ENCODE measurements at regions of chr1 and their contacts with region 1.

Region 1: GRCh38 chr1:173429471-173430402 is 47.4 kb upstream of the PRDX6 start:
- DNase-seq: peak; percentile 92
- H3K4me3 ChIP-seq: peak overlapping the region; percentile 26
- H3K27ac ChIP-seq: peak overlapping the region; percentile 74
- H3K4me1 ChIP-seq: peaks cover 24% of the 10 kb centered on the region
- H3K27me3 ChIP-seq: no peaks in the 10 kb centered on the region
- CTCF ChIP-seq: peak; percentile 93

Region 2: DNA sequence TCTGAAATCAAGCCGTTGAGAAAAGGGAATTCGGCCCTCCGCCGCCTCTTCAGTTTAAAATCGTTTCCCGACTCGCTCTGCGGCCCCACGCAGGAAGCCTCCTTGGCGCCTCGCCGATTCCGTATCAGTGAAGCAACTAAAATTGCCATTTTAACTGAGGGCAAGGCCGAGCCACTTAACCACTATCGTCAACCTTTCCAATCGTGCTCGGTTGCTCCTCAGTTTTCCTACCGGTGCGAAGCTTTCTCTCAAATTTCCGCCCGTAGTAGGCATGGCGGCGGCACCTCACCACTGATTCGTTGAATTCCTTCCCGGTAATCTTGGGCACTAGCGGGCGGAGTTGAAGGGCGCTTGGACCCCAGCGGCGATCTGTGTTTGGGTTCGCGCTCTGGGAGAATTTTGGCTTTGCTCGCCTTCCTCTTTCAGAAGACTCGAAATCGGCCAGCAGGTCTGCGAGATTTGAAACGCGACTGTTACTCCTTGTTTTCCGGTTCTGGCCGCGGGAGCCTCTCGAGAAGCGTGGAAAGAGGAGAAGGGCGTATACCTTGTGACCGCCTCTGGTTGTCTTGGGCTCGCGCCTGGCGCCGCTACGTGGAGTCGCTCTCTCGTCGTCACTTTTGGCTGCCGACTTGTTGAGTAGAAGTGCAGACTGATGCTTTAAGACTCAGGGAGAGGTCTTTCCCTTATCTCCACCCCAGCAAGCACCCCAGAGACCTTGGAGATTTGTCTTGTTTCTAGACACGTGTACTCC is 394.8 kb after region 1 on chr1 and contains the starts of genes CENPL and DARS2:
- CTCF ChIA-PET with region 1: interaction called, 16 read pairs
- POLR2A ChIA-PET with region 1: no interaction called
- intact Hi-C with region 1: loop called (anchors 1 kb)
- DNase-seq: peak; percentile 99
- H3K4me3 ChIP-seq: peak within 1 kb of the TSS; percentile 73
- H3K27ac ChIP-seq: peak within 1 kb of the TSS; percentile 94
- H3K4me1 ChIP-seq: peaks cover 13% of the 10 kb centered on the region
- H3K27me3 ChIP-seq: no peaks in the 10 kb centered on the region
- CTCF ChIP-seq: no peak
- total RNA-seq, gene CENPL: 34.3 and 35.7 TPM in 2 replicates
- total RNA-seq, gene DARS2: 41.6 and 43.4 TPM in 2 replicates

Region 3: GRCh38 chr1:174074757-174075156 is 645.0 kb after region 1 on chr1:
- CTCF ChIA-PET with region 1: no interaction called
- POLR2A ChIA-PET with region 1: no interaction called
- intact Hi-C with region 1: loop called (anchors 2 kb)
- DNase-seq: peak; percentile 44
- H3K4me3 ChIP-seq: no peak overlapping the region
- H3K27ac ChIP-seq: no peak overlapping the region
- H3K4me1 ChIP-seq: no peaks in the 10 kb centered on the region
- H3K27me3 ChIP-seq: no peaks in the 10 kb centered on the region
- CTCF ChIP-seq: peak; percentile 65

Region 4: DNA sequence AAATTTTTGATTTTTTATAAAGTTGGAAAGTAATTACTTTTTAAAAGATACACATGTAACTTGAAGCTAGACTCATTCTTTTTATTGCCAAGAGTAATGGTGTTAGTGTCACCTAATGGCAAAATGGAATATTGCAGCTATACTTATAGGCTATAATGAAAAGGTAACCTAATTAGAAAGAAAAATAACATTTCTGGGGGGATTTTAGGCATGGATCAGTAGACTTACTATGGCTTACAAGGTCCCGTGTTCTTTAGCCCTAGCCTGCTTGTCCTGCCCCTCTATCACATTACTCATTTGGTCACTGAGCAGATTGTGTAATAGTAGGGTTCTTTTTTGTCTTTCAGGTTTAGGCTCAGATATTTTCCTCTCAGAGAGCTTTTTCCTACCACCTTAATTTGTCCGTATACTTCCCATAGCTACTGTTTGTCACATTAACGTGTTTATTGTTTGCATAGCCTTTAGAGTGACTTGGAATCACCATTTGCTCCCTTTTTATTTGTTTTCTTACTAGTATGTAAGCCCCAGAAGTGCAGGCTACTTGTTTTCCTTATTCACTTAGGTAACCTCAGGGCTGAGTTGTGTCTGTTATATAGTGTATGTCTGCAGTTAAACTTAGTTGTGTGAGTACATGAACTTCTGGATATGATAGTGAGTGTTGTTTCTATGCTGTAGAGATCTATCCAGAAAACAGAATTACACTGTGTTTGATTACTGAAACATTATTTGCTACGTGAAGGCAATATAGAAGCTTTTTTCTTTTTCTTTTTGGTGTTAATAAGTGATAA is 788.2 kb after region 1 on chr1:
- CTCF ChIA-PET with region 1: interaction called, 10 read pairs
- POLR2A ChIA-PET with region 1: no interaction called
- intact Hi-C with region 1: loop called (anchors 2 kb)
- DNase-seq: peak; percentile 60
- H3K4me3 ChIP-seq: no peak overlapping the region
- H3K27ac ChIP-seq: no peak overlapping the region
- H3K4me1 ChIP-seq: peaks cover 3% of the 10 kb centered on the region
- H3K27me3 ChIP-seq: no peaks in the 10 kb centered on the region
- CTCF ChIP-seq: peak; percentile 81

Region 5: DNA sequence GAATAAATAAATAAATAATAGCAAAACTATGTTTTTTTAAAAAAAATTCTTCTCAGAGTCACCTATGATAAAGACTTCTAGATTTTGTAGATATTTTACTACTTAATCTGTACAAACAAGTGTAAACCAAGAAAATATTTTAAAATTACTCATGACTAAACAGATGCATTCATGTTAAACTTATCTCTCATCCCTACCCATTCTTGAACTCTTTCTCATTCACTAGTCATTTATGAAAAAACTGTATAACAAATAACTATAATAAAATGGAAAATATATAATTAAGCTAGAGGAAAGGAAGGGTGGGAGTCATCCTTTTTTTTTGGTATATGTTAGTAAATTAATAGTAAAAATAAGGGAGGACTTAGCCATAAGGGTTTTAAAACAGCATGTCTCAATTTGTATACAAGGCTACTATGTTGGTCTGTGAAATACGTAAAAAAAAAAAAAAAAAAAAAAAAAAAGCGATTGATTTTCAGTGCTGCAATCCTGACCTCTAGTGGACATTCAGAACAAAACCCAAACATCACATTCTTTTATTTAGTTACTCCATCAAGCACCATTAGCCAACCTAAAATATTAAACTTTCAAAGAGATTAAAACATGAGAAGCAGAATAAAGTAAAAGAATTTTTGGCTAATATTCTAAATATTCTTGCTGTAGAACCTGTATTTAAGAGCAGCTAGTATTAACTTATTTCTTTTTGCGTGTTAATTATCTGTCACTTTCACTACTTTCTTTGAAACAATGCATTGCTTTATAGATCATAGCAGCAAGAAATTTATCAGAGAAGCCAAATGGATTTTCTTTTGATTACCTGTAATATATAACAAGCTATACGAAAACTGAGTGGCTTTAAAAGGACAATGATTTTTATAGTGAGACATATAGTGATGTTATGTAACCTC is 1314.2 kb after region 1 on chr1:
- CTCF ChIA-PET with region 1: no interaction called
- POLR2A ChIA-PET with region 1: no interaction called
- intact Hi-C with region 1: loop called (anchors 2 kb)
- DNase-seq: peak; percentile 60
- H3K4me3 ChIP-seq: no peak overlapping the region
- H3K27ac ChIP-seq: no peak overlapping the region
- H3K4me1 ChIP-seq: no peaks in the 10 kb centered on the region
- H3K27me3 ChIP-seq: no peaks in the 10 kb centered on the region
- CTCF ChIP-seq: peak; percentile 74

Measured in A673 (cell line).